ENCODE measurements at regions of chr14 and their contacts with region 1.

Region 1: GRCh38 chr14:44271637-44272036 is 235.4 kb downstream of the FSCB start:
- DNase-seq: no peak
- ATAC-seq: no peak
- H3K4me3 ChIP-seq: no peak overlapping the region
- H3K27ac ChIP-seq: no peak overlapping the region
- H3K4me1 ChIP-seq: no peaks in the 10 kb centered on the region
- H3K27me3 ChIP-seq: no peaks in the 10 kb centered on the region
- CTCF ChIP-seq: no peak

Region 2: GRCh38 chr14:44945264-44945663 is 673.6 kb after region 1 on chr14:
- CTCF ChIA-PET with region 1: interaction called, 16 read pairs
- POLR2A ChIA-PET with region 1: no interaction called
- in situ Hi-C with region 1: no loop called
- intact Hi-C with region 1: no loop called
- DNase-seq: no peak
- ATAC-seq: no peak
- H3K4me3 ChIP-seq: no peak overlapping the region
- H3K27ac ChIP-seq: no peak overlapping the region
- H3K4me1 ChIP-seq: no peaks in the 10 kb centered on the region
- H3K27me3 ChIP-seq: no peaks in the 10 kb centered on the region
- CTCF ChIP-seq: no peak